Activated B cell treated with CpG ODN at 0.5 μM for 24 hours (primary cell): ENCODE measurements at regions of chr12 and their contacts with region 1.

Region 1: DNA sequence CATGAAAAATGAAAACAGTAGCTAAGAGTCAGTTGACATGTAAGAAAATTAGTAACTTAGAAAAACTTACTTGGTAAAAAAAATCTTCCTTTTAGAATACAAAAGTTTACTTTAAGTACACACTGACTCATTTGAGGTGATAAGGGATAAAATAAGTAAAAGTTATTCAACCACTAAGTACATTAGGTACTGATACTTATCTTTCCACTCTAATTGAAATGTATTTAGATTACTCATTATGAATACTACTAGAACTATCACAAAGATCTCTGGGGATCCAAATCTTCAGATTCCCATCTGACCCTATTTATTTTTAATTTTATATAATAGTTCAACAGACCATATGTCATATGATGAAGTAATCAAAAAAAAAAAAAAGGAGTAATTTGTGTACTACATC is 12.1 kb downstream of the SYCP3 start:
- DNase-seq: no peak
- ATAC-seq: no peak
- H3K4me3 Mint-ChIP-seq: no peak overlapping the region
- H3K27ac Mint-ChIP-seq: no peak overlapping the region
- H3K4me1 Mint-ChIP-seq: peaks cover 5% of the 10 kb centered on the region
- H3K27me3 Mint-ChIP-seq: no peaks in the 10 kb centered on the region
- CTCF ChIP-seq: no peak

Region 2: GRCh38 chr12:101648195-101648594 is 78.9 kb before region 1 on chr12:
- CTCF ChIA-PET with region 1: no interaction called
- POLR2A ChIA-PET with region 1: no interaction called
- intact Hi-C with region 1: no loop called
- DNase-seq: no peak
- ATAC-seq: peak; percentile 90
- H3K4me3 Mint-ChIP-seq: no peak overlapping the region
- H3K27ac Mint-ChIP-seq: peak overlapping the region; percentile 22
- H3K4me1 Mint-ChIP-seq: peaks cover 14% of the 10 kb centered on the region
- H3K27me3 Mint-ChIP-seq: no peaks in the 10 kb centered on the region
- CTCF ChIP-seq: no peak

Region 3: DNA sequence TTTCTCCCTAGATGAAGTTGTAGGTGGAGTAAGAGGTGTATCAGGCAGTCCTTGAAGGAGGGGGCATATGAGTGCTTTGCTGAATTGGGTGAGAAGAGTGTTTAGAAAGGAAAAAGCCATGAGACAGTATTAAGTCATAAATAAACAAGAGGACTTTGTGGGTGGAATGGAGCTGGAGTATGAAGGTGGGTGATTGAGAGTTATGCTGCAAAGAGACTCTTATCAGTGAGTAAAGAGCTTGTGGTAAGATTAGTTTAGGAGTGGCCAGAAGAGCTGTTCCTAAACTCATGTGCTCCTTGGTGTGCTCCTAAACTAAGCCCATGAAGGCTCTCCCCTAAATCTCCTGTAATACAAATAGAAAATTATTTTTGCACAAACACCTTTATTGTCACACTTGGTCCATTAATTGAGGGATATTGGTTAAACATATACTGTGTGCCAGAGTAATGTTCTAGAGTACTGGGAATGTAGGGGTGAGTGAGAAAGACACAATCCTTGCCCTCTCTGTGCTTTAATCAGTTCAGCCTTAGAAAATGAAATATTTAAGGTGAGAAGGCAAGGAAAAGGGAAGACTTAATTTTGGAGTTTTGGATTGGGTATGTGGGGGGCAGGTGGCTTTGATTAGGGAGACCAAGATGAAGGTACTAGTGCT is 19.9 kb before region 1 on chr12:
- CTCF ChIA-PET with region 1: no interaction called
- POLR2A ChIA-PET with region 1: no interaction called
- intact Hi-C with region 1: loop called (anchors 1 kb)
- DNase-seq: no peak
- ATAC-seq: no peak
- H3K4me3 Mint-ChIP-seq: no peak overlapping the region
- H3K27ac Mint-ChIP-seq: peak overlapping the region; percentile 9
- H3K4me1 Mint-ChIP-seq: peaks cover 60% of the 10 kb centered on the region
- H3K27me3 Mint-ChIP-seq: no peaks in the 10 kb centered on the region
- CTCF ChIP-seq: no peak

Region 4: DNA sequence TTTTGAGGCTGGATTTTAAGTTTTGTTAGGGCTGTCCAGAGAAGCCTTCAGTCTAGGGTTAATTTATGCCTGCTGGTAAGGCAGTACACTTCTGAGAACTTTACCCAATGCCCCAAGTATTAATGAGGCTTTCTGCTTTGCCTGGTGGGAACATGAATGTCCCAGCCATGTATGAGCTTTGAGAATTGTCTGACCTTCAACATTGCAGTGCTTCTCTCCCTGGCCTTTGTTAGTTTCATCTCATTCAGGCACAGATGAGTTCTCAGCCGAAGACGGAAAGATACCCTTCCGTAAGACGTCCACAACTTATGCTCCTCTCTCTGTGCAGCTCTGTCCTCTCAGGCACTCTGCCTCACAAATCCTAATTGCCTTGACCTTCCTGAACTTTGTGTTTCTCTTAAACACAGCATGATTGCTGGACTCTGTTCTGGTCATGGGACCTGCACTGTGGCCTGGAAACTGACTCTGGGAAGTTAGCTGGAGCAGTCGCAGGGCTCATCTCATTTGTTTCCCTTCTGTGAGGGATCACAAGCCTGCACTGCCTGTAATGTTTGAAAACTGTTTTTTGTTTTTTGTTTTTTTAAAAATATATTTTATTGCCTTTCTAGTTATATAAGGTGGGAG is 14.0 kb before region 1 on chr12:
- CTCF ChIA-PET with region 1: no interaction called
- POLR2A ChIA-PET with region 1: no interaction called
- intact Hi-C with region 1: loop called (anchors 1 kb)
- DNase-seq: no peak
- ATAC-seq: no peak
- H3K4me3 Mint-ChIP-seq: no peak overlapping the region
- H3K27ac Mint-ChIP-seq: no peak overlapping the region
- H3K4me1 Mint-ChIP-seq: peaks cover 50% of the 10 kb centered on the region
- H3K27me3 Mint-ChIP-seq: no peaks in the 10 kb centered on the region
- CTCF ChIP-seq: no peak

Region 5: GRCh38 chr12:101743724-101744472 is 16.8 kb after region 1 on chr12:
- CTCF ChIA-PET with region 1: no interaction called
- POLR2A ChIA-PET with region 1: interaction called, 4 read pairs
- intact Hi-C with region 1: loop called (anchors 2 kb)
- DNase-seq: peak; percentile 54
- ATAC-seq: peak; percentile 88
- H3K4me3 Mint-ChIP-seq: peak overlapping the region; percentile 36
- H3K27ac Mint-ChIP-seq: peak overlapping the region; percentile 96
- H3K4me1 Mint-ChIP-seq: peaks cover 69% of the 10 kb centered on the region
- H3K27me3 Mint-ChIP-seq: no peaks in the 10 kb centered on the region
- CTCF ChIP-seq: no peak